HEK293 (cell line): ENCODE measurements at regions of chr6 and their contacts with region 1.

Region 1: DNA sequence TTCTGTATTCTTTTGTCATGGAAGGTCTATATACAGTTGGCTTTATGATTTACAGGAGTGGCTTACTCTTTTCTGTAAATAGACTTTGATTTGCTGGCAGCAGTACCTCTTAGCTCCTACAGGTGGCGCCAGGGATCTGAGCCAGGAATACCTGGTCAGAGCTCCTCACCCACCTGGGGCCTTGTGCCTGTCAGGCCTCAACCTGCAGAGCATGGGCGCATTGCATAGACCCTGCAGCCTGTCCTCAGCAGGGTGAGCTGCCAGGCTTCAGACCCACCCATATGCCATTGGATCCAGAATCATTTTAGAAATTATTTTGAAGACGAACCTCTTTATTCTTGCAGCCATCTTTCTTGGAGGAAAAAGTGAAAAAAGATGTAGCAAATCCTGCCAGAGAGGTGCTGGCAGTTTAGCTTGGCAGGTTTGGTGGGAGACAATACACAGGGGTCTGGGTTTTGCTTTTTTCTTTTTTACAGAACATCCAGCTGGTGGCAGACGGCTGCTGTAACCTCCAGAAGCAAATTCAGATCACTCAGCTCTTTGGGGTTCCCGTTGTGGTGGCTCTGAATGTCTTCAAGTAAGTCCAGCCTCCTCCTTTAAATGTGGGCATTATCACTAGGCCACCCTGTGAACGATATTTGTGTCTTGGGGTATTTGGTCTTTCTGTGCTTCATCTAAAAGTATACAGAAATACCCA is 149.1 kb downstream of the MTHFD1L start:
- H3K4me3 ChIP-seq: no peak overlapping the region
- H3K27ac ChIP-seq: no peak overlapping the region
- H3K4me1 ChIP-seq: no peaks in the 10 kb centered on the region
- CTCF ChIP-seq: peak; percentile 68

Region 2: GRCh38 chr6:150987855-150988464 is 26.6 kb before region 1 on chr6:
- CTCF ChIA-PET with region 1: interaction called, 12 read pairs
- POLR2A ChIA-PET with region 1: interaction called, 5 read pairs
- H3K4me3 ChIP-seq: no peak overlapping the region
- H3K27ac ChIP-seq: no peak overlapping the region
- H3K4me1 ChIP-seq: no peaks in the 10 kb centered on the region
- CTCF ChIP-seq: no peak

Region 3: DNA sequence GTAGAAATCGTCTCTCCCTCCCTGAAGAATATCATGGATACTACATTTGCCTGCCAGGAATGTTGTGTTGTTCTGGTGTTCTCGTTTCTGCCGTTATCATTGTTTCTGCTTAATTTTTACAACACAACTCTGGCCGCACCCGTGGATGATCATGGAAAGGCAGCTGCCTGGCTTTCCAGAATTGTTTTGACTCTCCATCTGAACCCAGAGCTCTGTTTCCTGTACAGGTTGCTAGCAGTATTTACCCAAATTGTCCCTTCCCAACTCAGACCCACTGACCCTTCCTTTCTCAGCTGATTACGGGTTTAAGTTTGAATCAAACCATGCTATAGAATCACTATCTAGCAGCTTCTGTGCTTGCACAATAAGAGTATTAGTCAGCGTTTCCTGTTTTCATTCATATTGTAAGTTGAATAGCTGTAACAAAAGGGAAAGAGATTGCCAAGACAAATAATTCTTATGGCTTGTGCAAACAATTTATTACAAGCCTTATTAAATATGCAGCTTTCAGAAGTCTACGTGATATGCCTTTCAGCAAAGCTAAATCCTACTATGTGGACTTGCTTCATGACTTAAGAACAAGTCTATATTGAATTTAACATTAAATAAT is 10.0 kb before region 1 on chr6:
- CTCF ChIA-PET with region 1: interaction called, 45 read pairs
- POLR2A ChIA-PET with region 1: no interaction called
- H3K4me3 ChIP-seq: no peak overlapping the region
- H3K27ac ChIP-seq: no peak overlapping the region
- H3K4me1 ChIP-seq: peaks cover 10% of the 10 kb centered on the region
- CTCF ChIP-seq: no peak

Region 4: GRCh38 chr6:151041686-151042085 is 27.1 kb after region 1 on chr6:
- CTCF ChIA-PET with region 1: interaction called, 14 read pairs
- POLR2A ChIA-PET with region 1: no interaction called
- H3K4me3 ChIP-seq: no peak overlapping the region
- H3K27ac ChIP-seq: no peak overlapping the region
- H3K4me1 ChIP-seq: no peaks in the 10 kb centered on the region
- CTCF ChIP-seq: no peak

Region 5: DNA sequence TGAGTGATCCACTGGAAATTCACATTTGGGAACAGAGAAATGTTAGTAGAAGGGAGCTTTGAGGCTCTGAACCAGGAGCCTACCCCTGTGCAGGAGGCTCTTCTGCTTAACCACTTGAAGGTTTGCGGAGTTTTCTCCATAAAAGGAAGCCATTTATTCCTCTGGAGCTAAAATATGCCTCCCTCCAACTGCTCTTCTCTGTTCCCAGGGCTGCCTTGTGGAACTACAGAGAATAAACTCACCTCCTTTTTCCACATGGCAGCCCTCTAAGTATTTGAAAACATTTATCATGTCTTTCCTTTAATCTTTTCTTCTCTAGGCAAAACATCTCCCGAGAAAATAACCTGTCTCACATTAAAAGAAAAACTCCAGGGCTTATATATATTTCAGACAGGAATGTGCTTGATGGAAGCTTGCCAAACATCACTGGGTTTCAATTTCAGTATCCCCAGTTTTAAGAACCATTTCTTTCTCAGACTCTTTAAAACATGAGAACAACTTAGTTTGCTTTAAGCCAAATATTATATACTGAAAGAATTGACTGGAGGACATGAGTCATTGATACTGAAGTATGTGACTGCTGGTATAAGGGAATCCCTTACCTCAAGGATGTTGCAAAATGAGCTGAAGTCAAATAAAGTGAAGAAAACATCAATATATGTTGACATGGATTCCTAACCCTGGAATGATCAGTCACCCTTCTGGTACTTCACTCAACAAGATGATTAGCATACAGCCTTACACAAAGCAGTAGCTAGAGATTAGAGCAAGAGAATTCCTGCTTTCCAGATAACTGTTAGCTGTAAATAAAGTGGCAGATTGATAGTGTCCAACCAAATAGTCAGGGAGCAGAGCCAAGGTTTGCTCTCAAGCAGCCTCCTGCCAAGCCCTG is 302.8 kb after region 1 on chr6:
- CTCF ChIA-PET with region 1: interaction called, 512 read pairs
- POLR2A ChIA-PET with region 1: no interaction called
- H3K4me3 ChIP-seq: no peak overlapping the region
- H3K27ac ChIP-seq: no peak overlapping the region
- H3K4me1 ChIP-seq: no peaks in the 10 kb centered on the region
- CTCF ChIP-seq: no peak